Mucosa of descending colon (tissue), 3 donors: ENCODE measurements at regions of chr2 and their contacts with region 1.

Region 1: GRCh38 chr2:43226558-43226954 is at the start of gene ZFP36L2:
- DNase-seq: peak; percentile 94 to 98 (median 98)
- ATAC-seq: peak; percentile 68
- H3K4me3 ChIP-seq: peak within 1 kb of the TSS; percentile 95
- H3K4me1 ChIP-seq: peaks cover 21% of the 10 kb centered on the region
- CTCF ChIP-seq: no peak
- total RNA-seq, gene ZFP36L2: 160 to 198 (median 169) TPM

Region 2: GRCh38 chr2:42974721-42975717 is 251.5 kb before region 1 on chr2:
- intact Hi-C with region 1: loop called (anchors 10 kb)
- DNase-seq: peak; percentile 82 to 88 (median 87)
- ATAC-seq: peak; percentile 65
- H3K4me3 ChIP-seq: no peak overlapping the region
- H3K4me1 ChIP-seq: peaks cover 21% of the 10 kb centered on the region
- CTCF ChIP-seq: peak; percentile 79

Region 3: DNA sequence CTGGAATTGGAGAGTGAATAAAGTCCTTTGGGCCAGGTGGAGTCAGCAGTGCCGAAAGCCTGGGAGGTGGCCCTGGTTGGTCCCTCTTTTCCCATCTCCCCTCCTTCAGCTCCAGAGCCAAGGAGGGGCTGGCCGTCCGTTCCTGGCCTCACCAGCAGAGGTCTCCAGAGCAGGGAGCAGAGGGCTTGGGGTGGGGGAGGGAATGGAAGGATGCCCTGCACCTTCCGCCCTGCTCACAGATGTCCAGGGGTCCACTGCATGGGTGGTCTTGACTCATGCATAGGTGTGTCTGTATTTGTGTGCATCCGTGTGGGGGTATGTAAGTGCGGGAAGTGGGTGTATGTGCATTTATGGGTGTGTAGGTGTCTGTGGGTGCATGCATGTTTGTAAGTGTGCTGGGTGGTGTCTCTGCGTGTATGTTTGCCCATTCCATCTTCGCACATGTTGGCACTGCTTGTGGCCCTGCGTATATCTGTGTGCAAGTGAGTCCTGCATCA is 202.0 kb before region 1 on chr2:
- intact Hi-C with region 1: loop called in 1 of 2 experiments (anchors 5 kb)
- DNase-seq: peak in 2 of 3 donors; percentile 83 to 85
- ATAC-seq: peak; percentile 57
- H3K4me3 ChIP-seq: no peak overlapping the region
- H3K4me1 ChIP-seq: peaks cover 10% of the 10 kb centered on the region
- CTCF ChIP-seq: peak; percentile 51

Region 4: DNA sequence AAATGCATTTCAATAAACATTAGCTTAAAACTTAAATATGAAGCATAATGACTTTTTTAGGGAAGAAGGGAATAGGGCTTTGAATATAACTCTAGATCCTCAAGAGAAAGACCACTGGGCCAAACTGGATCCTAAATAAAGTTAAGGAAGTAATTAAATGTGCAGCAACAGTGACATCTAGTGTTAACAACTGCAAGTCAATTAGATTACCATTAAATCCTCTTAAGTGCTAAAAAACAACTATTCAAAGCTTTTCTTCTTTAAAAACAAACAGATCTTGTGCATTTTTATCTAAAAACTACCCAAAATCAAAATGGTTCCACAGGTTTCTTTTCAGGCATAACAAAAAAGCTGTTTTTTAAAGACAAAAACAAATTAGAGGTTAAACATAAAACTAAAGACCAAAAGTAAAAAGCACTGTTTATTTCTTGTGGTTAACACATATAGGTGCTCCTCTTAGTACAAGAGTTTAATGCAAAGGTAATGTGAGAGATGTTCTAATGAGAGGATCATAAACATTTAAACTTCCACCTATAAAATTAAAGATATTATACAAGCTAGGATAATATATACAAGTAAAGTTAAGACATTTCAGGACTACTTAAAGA is 257.9 kb after region 1 on chr2:
- intact Hi-C with region 1: loop called (anchors 10 kb)
- DNase-seq: peak in 1 of 3 donors; percentile 31
- ATAC-seq: peak; percentile 58
- H3K4me3 ChIP-seq: no peak overlapping the region
- H3K4me1 ChIP-seq: peaks cover 8% of the 10 kb centered on the region
- CTCF ChIP-seq: peak; percentile 18